Dendritic cell treated with granulocyte-macrophage colony-stimulating factor and Interleukin-4, amounts not matched to agents 40 ng/mL and 50 ng/mL, for 4 days (primary cell): ENCODE measurements at regions of chr1 and their contacts with region 1.

Region 1: DNA sequence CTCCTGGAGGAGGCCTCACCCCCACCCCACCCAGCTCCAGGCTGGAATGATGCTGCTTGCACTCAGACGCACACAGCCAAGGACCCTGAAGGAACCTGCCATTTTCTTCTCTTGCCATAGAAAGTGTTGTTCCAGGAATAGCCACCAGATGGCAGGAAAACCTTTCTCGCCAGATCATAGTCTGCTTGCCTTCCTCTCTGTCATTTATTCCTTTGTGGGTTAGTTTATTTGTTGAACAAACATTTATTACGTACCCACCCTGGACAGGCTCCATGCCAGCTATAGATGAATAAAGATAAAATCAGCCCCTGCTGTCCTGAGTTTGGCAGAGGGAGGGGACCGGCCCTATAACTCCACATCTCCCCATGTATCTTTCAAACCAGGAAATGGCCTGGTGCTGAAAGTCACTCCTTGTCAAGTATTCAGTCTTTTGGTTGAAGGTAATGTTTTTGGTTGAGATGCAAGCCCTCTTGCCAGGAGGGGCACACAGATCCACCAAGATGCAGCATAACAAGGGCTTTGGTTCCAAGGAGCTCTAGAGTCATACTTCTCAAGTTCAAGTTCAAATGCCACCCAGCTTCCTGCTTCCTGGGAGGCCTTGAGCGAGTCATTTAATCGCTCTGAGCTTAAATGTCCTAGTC is 7.0 kb upstream of the KCNC4 start:
- H3K4me3 Mint-ChIP-seq: no peak overlapping the region
- H3K27ac Mint-ChIP-seq: no peak overlapping the region
- H3K4me1 Mint-ChIP-seq: no peaks in the 10 kb centered on the region
- H3K27me3 Mint-ChIP-seq: peaks cover 5% of the 10 kb centered on the region

Region 2: GRCh38 chr1:110312188-110313121 is 109.3 kb after region 1 on chr1:
- intact Hi-C with region 1: loop called (anchors 1 kb)
- H3K4me3 Mint-ChIP-seq: no peak overlapping the region
- H3K27ac Mint-ChIP-seq: no peak overlapping the region
- H3K4me1 Mint-ChIP-seq: peaks cover 14% of the 10 kb centered on the region
- H3K27me3 Mint-ChIP-seq: no peaks in the 10 kb centered on the region

Region 3: GRCh38 chr1:110407260-110408210 is 204.4 kb after region 1 on chr1 and contains the start of gene LAMTOR5:
- intact Hi-C with region 1: loop called (anchors 5 kb)
- H3K4me3 Mint-ChIP-seq: peak within 1 kb of the TSS; percentile 100
- H3K27ac Mint-ChIP-seq: peak within 1 kb of the TSS; percentile 100
- H3K4me1 Mint-ChIP-seq: peaks cover 19% of the 10 kb centered on the region
- H3K27me3 Mint-ChIP-seq: no peaks in the 10 kb centered on the region

Region 4: GRCh38 chr1:110460253-110461220 is 257.4 kb after region 1 on chr1:
- intact Hi-C with region 1: loop called (anchors 2 kb)
- H3K4me3 Mint-ChIP-seq: no peak overlapping the region
- H3K27ac Mint-ChIP-seq: no peak overlapping the region
- H3K4me1 Mint-ChIP-seq: no peaks in the 10 kb centered on the region
- H3K27me3 Mint-ChIP-seq: no peaks in the 10 kb centered on the region

Region 5: DNA sequence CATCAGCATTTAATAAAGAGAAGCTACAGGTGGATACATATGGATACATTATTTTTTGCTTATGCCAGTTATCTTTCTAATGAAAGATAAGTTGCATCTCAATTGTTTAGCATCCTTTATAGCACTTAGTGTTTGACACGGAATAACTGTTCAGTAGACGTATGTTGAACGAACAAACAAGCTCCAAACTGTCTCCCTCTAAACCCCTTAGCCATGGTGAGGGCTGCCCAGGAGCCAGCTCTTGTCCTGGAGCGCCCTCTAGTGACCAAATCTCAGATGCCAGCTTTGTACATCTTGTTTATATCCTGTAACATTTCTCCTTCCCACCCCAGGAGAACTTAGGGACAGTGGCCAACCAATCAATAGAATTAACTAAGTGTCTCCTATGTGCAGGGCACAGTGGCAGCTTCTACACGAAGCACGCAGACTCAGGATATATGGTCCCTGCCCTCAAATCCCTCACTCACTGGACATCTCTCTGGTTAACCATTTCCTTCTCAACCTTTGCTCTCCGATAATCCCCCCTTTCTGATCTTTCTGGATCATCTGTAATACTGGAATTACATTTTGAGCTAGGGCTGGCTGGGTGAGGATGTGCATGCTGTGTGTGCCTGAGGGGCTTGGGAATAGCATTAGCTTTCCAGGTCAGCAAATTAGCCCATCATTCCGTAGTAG is 292.9 kb after region 1 on chr1:
- intact Hi-C with region 1: loop called (anchors 2 kb)
- H3K4me3 Mint-ChIP-seq: no peak overlapping the region
- H3K27ac Mint-ChIP-seq: no peak overlapping the region
- H3K4me1 Mint-ChIP-seq: peaks cover 30% of the 10 kb centered on the region
- H3K27me3 Mint-ChIP-seq: peaks cover 5% of the 10 kb centered on the region